Dorsolateral prefrontal cortex (tissue), 120 donors: ENCODE measurements at regions of chr9 and their contacts with region 1.

Region 1: DNA sequence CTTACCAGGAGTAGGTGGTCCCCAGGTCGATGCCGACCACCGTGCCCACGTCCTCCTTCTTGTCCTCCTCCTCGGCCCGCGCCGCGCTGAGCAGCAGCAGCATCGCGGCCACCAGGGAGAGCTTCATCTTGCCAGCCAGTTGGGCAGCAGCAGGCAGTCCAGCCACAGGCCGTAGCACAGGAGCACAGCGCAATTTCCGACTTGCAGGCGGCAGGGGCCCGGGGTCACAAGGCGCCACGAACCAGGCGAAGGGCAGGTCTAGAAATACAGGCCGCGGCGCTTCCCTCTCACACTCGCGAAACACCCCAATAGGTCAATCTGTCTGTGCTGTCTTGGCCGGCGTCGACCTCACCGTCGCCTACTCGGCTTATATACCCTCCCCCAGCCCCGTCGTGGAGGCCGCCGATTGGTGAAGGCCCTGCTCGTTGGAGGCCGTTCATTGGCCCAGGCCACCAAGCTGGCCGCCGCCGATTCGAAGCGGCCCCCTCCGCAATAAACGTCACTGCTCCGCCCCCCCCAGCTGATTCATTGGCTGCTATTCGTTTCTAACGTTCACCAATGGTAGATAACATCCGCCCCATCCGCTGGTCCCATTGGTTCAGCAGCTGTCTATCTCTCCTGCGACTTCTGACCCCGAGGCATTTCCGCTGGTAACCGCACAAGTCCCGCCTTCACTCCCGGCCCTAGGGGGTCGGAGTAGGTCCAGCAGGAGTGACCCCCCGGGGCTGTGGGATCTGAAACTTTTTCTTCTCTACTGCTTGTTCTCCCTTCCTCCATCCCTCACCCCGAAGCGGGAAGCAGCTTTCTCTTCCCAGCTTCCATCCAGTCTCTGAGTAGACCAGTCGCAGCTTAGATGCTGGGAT is at the start of gene HSPA5:
- DNase-seq: peak; percentile 99 to 100 (median 100)
- H3K4me3 ChIP-seq: peak within 1 kb of the TSS; percentile 68 to 100 (median 98)
- H3K27ac ChIP-seq: peak within 1 kb of the TSS; percentile 51 to 99 (median 93)
- H3K27me3 ChIP-seq: no peaks in the 10 kb centered on the region
- CTCF ChIP-seq: peak in 22 of 56 donors; percentile 3 to 47 (median 24)
- total RNA-seq, gene HSPA5: 62.3 to 341 (median 107) TPM

Region 2: DNA sequence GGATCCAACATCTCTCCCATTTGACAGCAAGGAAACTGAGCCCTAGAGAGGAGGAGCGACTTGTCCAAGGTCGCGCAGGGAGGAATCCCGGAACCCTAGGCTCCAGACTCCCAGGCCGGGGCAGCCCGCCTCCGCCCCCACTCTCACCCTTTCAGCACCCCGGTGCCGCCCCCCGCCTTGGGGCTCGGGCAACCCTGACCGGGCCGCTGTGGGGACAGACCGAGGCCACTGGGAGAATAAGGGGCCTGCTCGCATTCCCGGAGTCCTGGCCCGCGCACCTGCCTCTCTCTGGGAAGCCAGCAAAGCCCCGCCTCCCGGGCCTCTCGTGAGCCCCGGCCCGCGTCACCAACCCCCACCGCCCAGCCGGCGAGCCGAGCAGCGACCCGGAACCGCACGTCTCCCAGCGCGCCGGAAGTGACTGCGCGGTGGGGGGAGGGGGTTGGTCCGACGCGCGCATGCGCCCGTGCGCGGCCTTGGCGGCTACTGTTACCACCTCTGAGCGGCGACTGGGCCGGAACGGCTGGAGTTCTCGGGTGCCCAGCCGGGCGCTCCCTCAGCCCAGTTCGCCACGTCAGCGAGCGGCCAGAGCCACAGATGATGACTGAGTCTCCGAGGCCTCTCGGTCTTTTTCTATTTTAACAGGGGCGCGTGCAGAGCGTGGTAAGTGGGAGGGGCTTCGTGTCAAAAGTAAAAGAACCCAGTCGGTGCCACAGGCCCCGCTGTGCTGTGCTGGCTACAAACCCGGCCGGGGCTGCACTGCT is 300.4 kb before region 1 on chr9 and contains the start of gene GOLGA1:
- intact Hi-C with region 1: loop called in 1 of 2 experiments (anchors 5 kb)
- DNase-seq: peak; percentile 87 to 95 (median 92)
- H3K4me3 ChIP-seq: peak within 1 kb of the TSS; percentile 58 to 100 (median 95)
- H3K27ac ChIP-seq: peak within 1 kb of the TSS; percentile 63 to 99 (median 96)
- H3K27me3 ChIP-seq: no peaks in the 10 kb centered on the region
- CTCF ChIP-seq: peak in 27 of 56 donors; percentile 5 to 58 (median 28)
- total RNA-seq, gene GOLGA1: 16.5 to 38.0 (median 25.8) TPM

Region 3: GRCh38 chr9:125143375-125144090 is 97.7 kb before region 1 on chr9 and contains the start of gene SCAI:
- intact Hi-C with region 1: loop called in 1 of 2 experiments (anchors 2 kb)
- DNase-seq: peak; percentile 98 to 100 (median 99)
- H3K4me3 ChIP-seq: peak within 1 kb of the TSS; percentile 33 to 80 (median 68)
- H3K27ac ChIP-seq: peak within 1 kb of the TSS in 42 of 59 donors; percentile 8 to 84 (median 62)
- H3K27me3 ChIP-seq: no peaks in the 10 kb centered on the region
- CTCF ChIP-seq: peak; percentile 93 to 100 (median 99)
- total RNA-seq, gene SCAI: 19.8 to 73.6 (median 49.9) TPM

Region 4: DNA sequence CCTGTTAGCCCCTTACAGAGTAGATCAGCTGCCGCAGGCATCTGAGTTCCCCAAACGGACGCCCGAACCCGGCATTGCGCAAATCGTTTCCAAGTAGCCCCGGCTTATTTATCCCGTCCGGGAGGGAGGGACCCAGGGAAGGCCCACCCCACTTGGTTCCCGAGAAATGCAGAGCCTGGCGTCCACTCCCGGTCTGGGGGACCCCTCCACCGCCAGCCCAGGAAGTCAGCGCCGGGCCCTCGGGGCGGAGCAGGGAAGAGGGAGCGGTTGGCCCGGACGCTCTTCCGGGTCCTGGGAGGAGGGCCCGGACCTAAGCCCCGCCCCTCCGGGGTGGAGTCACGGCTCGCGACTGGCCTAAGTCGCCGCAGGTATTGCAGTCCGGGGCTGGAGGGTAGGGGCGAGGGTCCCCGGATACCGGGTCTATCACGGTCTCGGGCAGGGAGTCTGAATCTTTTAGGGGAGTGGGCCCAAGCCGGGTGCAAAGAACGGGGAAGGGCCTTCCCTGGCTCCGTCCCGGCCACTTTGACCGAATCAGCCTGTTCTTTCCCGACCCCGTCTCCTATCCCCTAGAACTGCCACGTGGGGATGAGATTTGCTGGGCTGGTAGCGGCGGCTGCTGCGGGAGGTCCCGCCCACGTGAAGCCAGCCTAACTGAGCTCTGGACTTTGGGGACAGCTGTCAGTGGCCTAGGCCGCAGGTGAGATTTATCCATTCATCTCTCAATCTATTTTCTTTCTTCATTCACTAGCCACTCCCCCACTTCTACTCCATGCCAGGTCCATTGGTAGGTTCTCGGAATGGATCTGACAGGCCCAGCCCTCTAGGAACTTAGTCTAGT is 40.8 kb before region 1 on chr9 and contains the start of gene RABEPK:
- intact Hi-C with region 1: loop called (anchors 5 kb)
- DNase-seq: peak; percentile 82 to 95 (median 90)
- H3K4me3 ChIP-seq: peak within 1 kb of the TSS; percentile 67 to 100 (median 88)
- H3K27ac ChIP-seq: peak within 1 kb of the TSS in 57 of 59 donors; percentile 36 to 96 (median 89)
- H3K27me3 ChIP-seq: no peaks in the 10 kb centered on the region
- CTCF ChIP-seq: peak in 10 of 56 donors; percentile 4 to 48 (median 16)
- total RNA-seq, gene RABEPK: 15.3 to 31.2 (median 21.3) TPM

Region 5: GRCh38 chr9:125261501-125262293 is 20.5 kb after region 1 on chr9 and contains the start of gene GAPVD1:
- intact Hi-C with region 1: loop called in 1 of 2 experiments (anchors 1 kb)
- DNase-seq: peak; percentile 64 to 94 (median 81)
- H3K4me3 ChIP-seq: peak within 1 kb of the TSS; percentile 63 to 100 (median 96)
- H3K27ac ChIP-seq: peak within 1 kb of the TSS; percentile 13 to 94 (median 85)
- H3K27me3 ChIP-seq: no peaks in the 10 kb centered on the region
- CTCF ChIP-seq: peak; percentile 10 to 77 (median 56)
- total RNA-seq, gene GAPVD1: 52.7 to 86.4 (median 69.3) TPM